Mucosa of descending colon (tissue), 3 donors: ENCODE measurements at regions of chr1 and their contacts with region 1.

Region 1: GRCh38 chr1:81270051-81270450 is 530.7 kb upstream of the ADGRL2 start:
- DNase-seq: no peak
- ATAC-seq: no peak
- H3K4me3 ChIP-seq: no peak overlapping the region
- H3K4me1 ChIP-seq: no peaks in the 10 kb centered on the region
- CTCF ChIP-seq: no peak

Region 2: GRCh38 chr1:82565146-82565545 is 1295.1 kb after region 1 on chr1:
- intact Hi-C with region 1: loop called in 1 of 2 experiments (anchors 5 kb)
- DNase-seq: no peak
- ATAC-seq: no peak
- H3K4me3 ChIP-seq: no peak overlapping the region
- H3K4me1 ChIP-seq: no peaks in the 10 kb centered on the region
- CTCF ChIP-seq: no peak